Vagina (tissue), 2 donors: ENCODE measurements at regions of chr1 and their contacts with region 1.

Region 1: DNA sequence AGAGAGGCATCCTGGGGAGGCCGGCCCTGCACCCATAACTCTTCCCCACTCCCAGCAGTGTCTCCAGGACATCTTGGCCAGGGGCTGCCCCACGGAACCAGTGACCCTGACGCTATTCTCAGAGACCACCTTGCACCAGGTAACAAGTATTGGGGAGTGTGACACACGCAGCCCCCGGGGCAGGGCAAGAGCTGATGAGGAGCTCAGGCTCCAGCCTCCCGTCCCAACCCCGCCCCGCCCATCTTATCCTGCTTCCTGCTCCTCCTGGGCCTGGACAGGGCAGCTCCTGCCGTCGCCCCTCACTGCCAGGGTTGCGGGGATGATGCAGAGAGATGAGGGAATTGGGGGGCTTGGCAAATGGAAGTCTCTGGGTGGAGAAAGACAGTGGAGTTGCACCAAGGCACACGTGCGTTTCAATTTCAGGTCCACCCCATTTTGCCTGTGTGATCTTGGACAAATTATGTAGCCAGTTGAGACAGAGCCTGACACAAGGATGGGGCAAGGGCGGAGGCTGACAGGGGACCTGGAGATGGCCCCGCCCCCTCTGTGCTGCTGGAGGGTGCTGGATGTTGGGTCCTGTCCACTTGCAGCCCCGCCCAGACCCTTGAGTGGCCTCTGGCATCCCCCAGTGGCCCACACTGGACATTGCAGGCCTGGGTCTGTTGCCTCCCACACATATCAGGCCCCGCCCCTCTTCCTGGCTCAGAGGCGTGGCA is 10.7 kb downstream of the CLCNKA start:
- DNase-seq: no peak
- H3K4me3 ChIP-seq: no peak overlapping the region
- H3K27ac ChIP-seq: no peak overlapping the region
- H3K4me1 ChIP-seq: peaks cover 9% of the 10 kb centered on the region
- H3K27me3 ChIP-seq: no peaks in the 10 kb centered on the region
- CTCF ChIP-seq: peak; percentile 88 to 94 (median 88)
- POLR2A ChIP-seq: no peak

Region 2: GRCh38 chr1:14037101-14037847 is 1995.3 kb before region 1 on chr1:
- intact Hi-C with region 1: no loop called
- DNase-seq: no peak
- H3K4me3 ChIP-seq: no peak overlapping the region
- H3K27ac ChIP-seq: no peak overlapping the region
- H3K4me1 ChIP-seq: no peaks in the 10 kb centered on the region
- H3K27me3 ChIP-seq: no peaks in the 10 kb centered on the region
- CTCF ChIP-seq: no peak
- POLR2A ChIP-seq: no peak

Region 3: DNA sequence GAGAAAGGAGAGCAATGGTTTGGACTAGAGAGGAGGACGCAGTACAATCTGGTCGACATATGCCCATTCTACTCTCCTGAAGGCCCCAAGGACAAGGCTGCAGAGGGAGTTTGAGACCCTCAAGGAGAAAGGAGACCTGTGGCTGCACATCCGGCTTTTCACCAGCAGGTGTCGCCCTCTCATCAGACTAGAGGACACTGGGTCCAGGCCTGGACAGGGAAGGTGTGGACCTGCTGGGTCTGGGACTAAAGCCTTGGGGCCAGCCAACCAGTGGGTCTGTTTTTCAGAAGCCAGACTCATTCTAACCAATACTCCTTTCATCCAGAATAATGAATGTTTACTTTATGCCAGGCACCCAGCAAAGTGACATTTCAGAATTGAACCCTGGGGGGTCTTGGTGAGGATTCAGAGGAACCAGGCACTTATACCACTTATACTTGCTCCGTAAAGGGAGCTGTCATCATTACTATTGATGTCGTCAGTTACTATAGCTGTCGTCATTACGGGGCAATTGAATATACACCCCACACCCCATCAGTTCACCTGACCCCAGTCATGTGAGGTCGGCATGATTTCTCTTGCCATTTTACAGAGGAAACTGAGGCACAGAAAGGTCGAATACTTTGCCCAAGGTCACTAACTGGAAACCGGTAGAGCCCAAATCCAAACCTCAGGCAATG is 23.4 kb before region 1 on chr1:
- intact Hi-C with region 1: loop called (anchors 2 kb)
- DNase-seq: no peak
- H3K4me3 ChIP-seq: no peak overlapping the region
- H3K27ac ChIP-seq: no peak overlapping the region
- H3K4me1 ChIP-seq: peaks cover 20% of the 10 kb centered on the region
- H3K27me3 ChIP-seq: no peaks in the 10 kb centered on the region
- CTCF ChIP-seq: peak; percentile 92 to 98 (median 98)
- POLR2A ChIP-seq: no peak